ENCODE measurements at regions of chr11 and their contacts with region 1.

Region 1: GRCh38 chr11:44110231-44110679 is 14.8 kb downstream of the EXT2 start:
- DNase-seq: peak; percentile 65
- H3K4me3 ChIP-seq: no peak overlapping the region
- H3K27ac ChIP-seq: no peak overlapping the region
- H3K4me1 ChIP-seq: peaks cover 14 to 16% of the 10 kb centered on the region in 2 experiments; a peak in 3 of 4 replicates
- H3K27me3 ChIP-seq: no peaks in the 10 kb centered on the region
- CTCF ChIP-seq: peak; percentile 88
- EP300 ChIP-seq: no peak
- RAD21 ChIP-seq: peak; percentile 89

Region 2: GRCh38 chr11:44277196-44278090 is 167.2 kb after region 1 on chr11:
- CTCF ChIA-PET with region 1: interaction called, 11 read pairs
- POLR2A ChIA-PET with region 1: no interaction called
- DNase-seq: no peak
- H3K4me3 ChIP-seq: no peak overlapping the region
- H3K27ac ChIP-seq: no peak overlapping the region
- H3K4me1 ChIP-seq: peaks cover 0 to 10% of the 10 kb centered on the region in 2 experiments; a peak in 1 of 4 replicates
- H3K27me3 ChIP-seq: no peaks in the 10 kb centered on the region
- CTCF ChIP-seq: no peak
- EP300 ChIP-seq: no peak
- RAD21 ChIP-seq: no peak

Region 3: GRCh38 chr11:44494785-44495184 is 384.5 kb after region 1 on chr11:
- CTCF ChIA-PET with region 1: no interaction called
- POLR2A ChIA-PET with region 1: no interaction called
- DNase-seq: no peak
- H3K4me3 ChIP-seq: no peak overlapping the region
- H3K27ac ChIP-seq: no peak overlapping the region
- H3K4me1 ChIP-seq: no peaks in the 10 kb centered on the region
- H3K27me3 ChIP-seq: peaks cover 4% of the 10 kb centered on the region; the same call in 1 of the 2 replicates
- CTCF ChIP-seq: no peak
- EP300 ChIP-seq: no peak
- RAD21 ChIP-seq: no peak

Region 4: GRCh38 chr11:44538375-44539054 is 428.3 kb after region 1 on chr11:
- CTCF ChIA-PET with region 1: interaction called, 10 read pairs
- POLR2A ChIA-PET with region 1: no interaction called
- DNase-seq: peak; percentile 90
- H3K4me3 ChIP-seq: peak overlapping the region in 1 of 2 experiments; percentile 17; a peak in 1 of 4 replicates
- H3K27ac ChIP-seq: no peak overlapping the region
- H3K4me1 ChIP-seq: peaks cover 0 to 2% of the 10 kb centered on the region in 2 experiments; a peak in 1 of 4 replicates
- H3K27me3 ChIP-seq: no peaks in the 10 kb centered on the region
- CTCF ChIP-seq: peak; percentile 93
- EP300 ChIP-seq: no peak
- RAD21 ChIP-seq: peak; percentile 99